ENCODE measurements at regions of chr14 and their contacts with region 1.

Region 1: GRCh38 chr14:95098984-95099599 is 58.2 kb downstream of the DICER1 start:
- DNase-seq: no peak

Region 2: GRCh38 chr14:94689218-94689984 is 409.7 kb before region 1 on chr14:
- intact Hi-C with region 1: loop called (anchors 5 kb)
- DNase-seq: peak; percentile 80

Region 3: DNA sequence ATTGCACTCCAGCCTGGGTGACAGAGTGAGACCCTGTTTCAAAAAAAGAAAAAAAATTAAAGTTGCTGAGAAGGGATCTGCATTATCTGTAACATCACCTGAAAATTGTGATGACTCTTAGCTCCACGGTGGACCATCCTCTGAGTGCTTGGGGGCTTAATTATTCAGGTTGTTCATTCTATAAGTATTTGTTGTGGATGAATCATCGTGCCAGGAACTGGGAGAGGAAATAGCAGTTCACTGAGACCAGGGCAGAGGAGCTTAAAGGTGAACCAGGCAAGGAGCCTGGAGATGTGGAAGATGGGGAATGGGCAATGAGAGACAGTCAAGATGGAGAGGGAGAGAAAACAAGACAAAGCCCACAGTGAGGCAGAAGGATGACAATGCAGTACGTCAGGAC is 303.7 kb before region 1 on chr14:
- intact Hi-C with region 1: no loop called
- DNase-seq: no peak

Region 4: DNA sequence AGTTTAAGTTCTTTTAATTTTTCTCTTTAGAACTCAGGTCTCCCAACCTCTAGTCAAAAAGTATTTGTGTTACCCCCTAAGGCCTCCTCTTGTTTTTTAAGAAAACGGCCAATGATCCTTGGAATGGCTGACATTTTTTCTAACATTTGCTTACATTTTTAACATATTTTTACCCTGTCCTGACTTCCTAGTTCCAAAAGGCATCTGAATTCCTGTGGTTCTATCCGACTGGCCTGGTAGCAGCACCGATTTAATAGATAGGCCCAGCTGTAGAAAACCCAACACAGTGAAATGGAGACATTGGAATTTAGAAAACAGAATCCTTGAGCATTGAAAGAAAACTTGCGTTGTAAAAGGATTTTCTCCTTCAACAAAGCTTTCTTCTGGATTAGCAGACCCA is 194.5 kb before region 1 on chr14:
- intact Hi-C with region 1: loop called (anchors 5 kb)
- DNase-seq: no peak

Region 5: DNA sequence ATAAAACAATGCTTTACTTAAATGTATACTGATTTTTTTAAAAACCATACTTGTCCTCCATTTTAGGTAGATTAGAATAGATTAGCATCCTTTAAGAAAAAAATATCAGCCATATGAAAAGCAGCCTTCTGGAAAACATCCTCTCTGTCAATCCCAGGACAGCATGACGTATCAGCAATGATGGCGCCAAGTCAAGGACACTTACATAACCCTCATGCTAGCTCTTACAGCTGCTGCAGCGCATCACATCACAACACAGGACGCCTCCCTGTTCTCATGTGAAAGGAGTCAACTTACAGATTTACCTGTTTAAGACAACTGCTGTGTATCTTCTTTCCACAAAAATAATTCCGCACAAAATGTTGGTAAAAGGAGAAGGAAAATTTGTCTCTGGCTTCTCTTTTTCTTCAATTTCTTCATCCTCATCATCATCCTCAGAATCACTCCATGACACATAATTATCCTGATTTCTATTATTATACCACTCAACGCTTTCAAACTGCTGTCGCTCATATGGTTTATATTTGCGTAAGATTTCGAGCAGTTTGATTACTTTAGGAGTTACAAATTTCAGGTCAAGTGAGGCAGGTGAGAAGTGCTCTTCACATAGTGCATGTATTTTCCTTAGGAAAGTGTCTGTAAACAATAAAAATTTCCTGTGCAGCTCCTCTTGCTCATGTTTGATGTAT is 24.9 kb after region 1 on chr14:
- intact Hi-C with region 1: no loop called
- DNase-seq: no peak

Measured in cardiac septum (tissue), 1 donor.